Activated CD8-positive, alpha-beta memory T cell treated with anti-CD3 and anti-CD28 coated beads, Interleukin-2, amount 10 ng/mL, durations not matched to agents 7 days and 5 days (primary cell): ENCODE measurements at regions of chr16 and their contacts with region 1.

Region 1: DNA sequence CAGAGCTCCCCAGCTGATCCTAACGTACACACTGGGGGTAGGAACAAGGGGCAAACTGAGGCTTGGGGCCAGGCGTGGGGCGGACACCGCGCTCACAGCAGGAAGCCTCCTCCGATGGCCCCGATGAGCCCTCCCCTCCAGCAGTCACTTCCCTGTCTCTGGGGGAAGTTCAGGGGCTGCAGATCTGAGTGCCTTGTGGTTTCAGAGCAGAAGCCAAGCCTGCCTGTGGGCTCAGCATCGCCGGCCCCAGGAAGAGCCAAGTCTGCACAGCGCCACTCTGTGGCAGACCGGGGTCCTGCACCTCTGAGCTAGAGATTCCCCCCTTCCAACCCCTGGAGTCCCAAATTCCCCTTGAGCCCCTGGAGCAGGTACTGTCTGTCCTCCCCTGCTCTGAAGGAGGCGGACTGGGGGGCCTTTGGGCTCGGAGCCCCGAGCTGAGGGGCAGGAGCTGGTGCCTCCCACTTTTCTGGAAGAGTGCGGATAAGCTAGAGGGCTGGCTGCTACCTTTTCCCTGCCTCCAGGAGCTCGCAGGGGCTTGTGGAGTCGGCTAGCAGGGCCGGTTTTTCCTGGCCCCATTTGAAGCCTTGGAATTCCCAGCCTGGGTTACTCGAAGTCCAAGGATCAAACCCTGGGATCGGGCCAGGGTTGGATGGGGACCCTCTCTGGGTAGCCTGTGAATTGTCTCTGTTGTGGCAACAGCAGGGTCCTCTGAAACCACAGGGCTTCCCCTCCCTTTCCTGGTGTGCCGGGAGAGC is 2.9 kb downstream of the GSE1 start:
- DNase-seq: peak; percentile 94
- ATAC-seq: peak; percentile 52
- H3K4me3 Mint-ChIP-seq: peak overlapping the region; percentile 66
- H3K27ac Mint-ChIP-seq: peak overlapping the region; percentile 80
- H3K4me1 Mint-ChIP-seq: peaks cover 26% of the 10 kb centered on the region
- H3K27me3 Mint-ChIP-seq: no peaks in the 10 kb centered on the region

Region 2: GRCh38 chr16:85286970-85287824 is 328.8 kb before region 1 on chr16:
- CTCF ChIA-PET with region 1: no interaction called
- DNase-seq: no peak
- ATAC-seq: no peak
- H3K4me3 Mint-ChIP-seq: no peak overlapping the region
- H3K27ac Mint-ChIP-seq: no peak overlapping the region
- H3K4me1 Mint-ChIP-seq: no peaks in the 10 kb centered on the region
- H3K27me3 Mint-ChIP-seq: peaks cover 1% of the 10 kb centered on the region

Region 3: GRCh38 chr16:85428168-85428898 is 187.7 kb before region 1 on chr16:
- CTCF ChIA-PET with region 1: interaction called, 237 read pairs
- DNase-seq: peak; percentile 70
- ATAC-seq: peak; percentile 79
- H3K4me3 Mint-ChIP-seq: no peak overlapping the region
- H3K27ac Mint-ChIP-seq: no peak overlapping the region
- H3K4me1 Mint-ChIP-seq: no peaks in the 10 kb centered on the region
- H3K27me3 Mint-ChIP-seq: no peaks in the 10 kb centered on the region

Region 4: DNA sequence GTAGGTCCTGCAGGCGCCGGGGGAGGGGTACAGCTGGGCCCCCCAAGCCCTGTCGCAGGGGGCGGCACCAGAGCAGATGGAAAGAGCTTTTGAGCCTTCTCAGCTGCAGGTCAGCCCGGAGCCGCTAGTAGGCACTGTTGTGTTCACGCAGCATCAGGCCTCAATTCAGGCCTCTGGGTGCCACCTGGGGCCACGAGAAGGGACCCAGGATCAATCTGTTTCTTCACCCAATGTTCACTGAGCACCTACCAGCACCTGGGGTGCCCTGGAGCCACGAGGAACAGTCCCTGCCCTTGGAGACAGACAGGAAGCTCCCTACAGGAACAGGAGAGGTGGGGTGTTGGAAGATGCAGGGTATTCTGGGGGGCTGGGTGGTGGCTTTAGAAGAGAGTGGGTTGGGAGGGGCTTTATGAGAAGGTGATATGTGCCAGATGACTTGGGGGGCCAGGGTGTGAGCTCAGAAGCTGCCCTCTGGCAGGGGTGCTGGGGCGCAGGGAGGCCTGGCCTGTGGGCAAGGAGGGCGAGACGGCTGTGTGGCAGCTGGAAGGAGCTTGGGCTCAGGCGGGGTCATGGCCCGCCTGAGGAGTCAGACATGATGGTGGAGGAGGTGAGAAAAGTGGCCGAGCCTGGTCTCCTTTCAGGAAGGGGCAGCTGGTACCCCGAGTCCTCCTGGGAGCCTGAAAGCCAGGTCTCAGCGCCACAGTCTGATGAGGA is 124.8 kb before region 1 on chr16:
- CTCF ChIA-PET with region 1: interaction called, 30 read pairs
- DNase-seq: peak; percentile 53
- ATAC-seq: peak; percentile 36
- H3K4me3 Mint-ChIP-seq: no peak overlapping the region
- H3K27ac Mint-ChIP-seq: no peak overlapping the region
- H3K4me1 Mint-ChIP-seq: no peaks in the 10 kb centered on the region
- H3K27me3 Mint-ChIP-seq: no peaks in the 10 kb centered on the region

Region 5: GRCh38 chr16:85569615-85570212 is 46.3 kb before region 1 on chr16:
- CTCF ChIA-PET with region 1: interaction called, 16 read pairs
- DNase-seq: peak; percentile 87
- ATAC-seq: peak; percentile 76
- H3K4me3 Mint-ChIP-seq: peak overlapping the region; percentile 68
- H3K27ac Mint-ChIP-seq: peak overlapping the region; percentile 91
- H3K4me1 Mint-ChIP-seq: peaks cover 56% of the 10 kb centered on the region
- H3K27me3 Mint-ChIP-seq: no peaks in the 10 kb centered on the region

Region 6: GRCh38 chr16:85592700-85593493 is 23.1 kb before region 1 on chr16:
- CTCF ChIA-PET with region 1: no interaction called
- DNase-seq: no peak
- ATAC-seq: no peak
- H3K4me3 Mint-ChIP-seq: no peak overlapping the region
- H3K27ac Mint-ChIP-seq: no peak overlapping the region
- H3K4me1 Mint-ChIP-seq: peaks cover 2% of the 10 kb centered on the region
- H3K27me3 Mint-ChIP-seq: no peaks in the 10 kb centered on the region

Region 7: GRCh38 chr16:85659805-85660495 is 43.9 kb after region 1 on chr16:
- CTCF ChIA-PET with region 1: interaction called, 11 read pairs
- DNase-seq: peak; percentile 75
- ATAC-seq: peak; percentile 72
- H3K4me3 Mint-ChIP-seq: no peak overlapping the region
- H3K27ac Mint-ChIP-seq: no peak overlapping the region
- H3K4me1 Mint-ChIP-seq: no peaks in the 10 kb centered on the region
- H3K27me3 Mint-ChIP-seq: no peaks in the 10 kb centered on the region